Sigmoid colon (tissue), 7 donors: ENCODE measurements at regions of chr10 and their contacts with region 1.

Region 1: GRCh38 chr10:99917963-99918825 is 91.6 kb downstream of the DNMBP start:
- DNase-seq: peak; percentile 73
- H3K4me3 ChIP-seq: peak overlapping the region in 3 of 4 donors; percentile 16 to 30 (median 30)
- H3K27ac ChIP-seq: peak overlapping the region; percentile 34 to 72 (median 70)
- H3K4me1 ChIP-seq: peaks cover 0 to 17% (median 10%) of the 10 kb centered on the region in 4 donors
- H3K27me3 ChIP-seq: no peaks in the 10 kb centered on the region
- CTCF ChIP-seq: no peak
- EP300 ChIP-seq: no peak
- POLR2A ChIP-seq: no peak

Region 2: GRCh38 chr10:99845837-99846382 is 72.3 kb before region 1 on chr10:
- intact Hi-C with region 1: loop called (anchors 5 kb)
- DNase-seq: peak; percentile 91
- H3K4me3 ChIP-seq: peak overlapping the region in 3 of 4 donors; percentile 26 to 41 (median 32)
- H3K27ac ChIP-seq: peak overlapping the region in 1 of 4 donors; percentile 60
- H3K4me1 ChIP-seq: peaks cover 0 to 16% (median 4%) of the 10 kb centered on the region in 4 donors
- H3K27me3 ChIP-seq: no peaks in the 10 kb centered on the region
- CTCF ChIP-seq: peak; percentile 88 to 96 (median 90)
- EP300 ChIP-seq: no peak
- POLR2A ChIP-seq: no peak

Region 3: GRCh38 chr10:99859585-99859984 is 58.6 kb before region 1 on chr10:
- intact Hi-C with region 1: no loop called
- DNase-seq: no peak
- H3K4me3 ChIP-seq: no peak overlapping the region
- H3K27ac ChIP-seq: no peak overlapping the region
- H3K4me1 ChIP-seq: no peaks in the 10 kb centered on the region
- H3K27me3 ChIP-seq: no peaks in the 10 kb centered on the region
- CTCF ChIP-seq: no peak
- EP300 ChIP-seq: no peak
- POLR2A ChIP-seq: no peak

Region 4: GRCh38 chr10:99958302-99958701 is 40.1 kb after region 1 on chr10:
- intact Hi-C with region 1: no loop called
- DNase-seq: no peak
- H3K4me3 ChIP-seq: no peak overlapping the region
- H3K27ac ChIP-seq: peak overlapping the region; percentile 12 to 65 (median 46)
- H3K4me1 ChIP-seq: peaks cover 0 to 23% (median 12%) of the 10 kb centered on the region in 4 donors
- H3K27me3 ChIP-seq: no peaks in the 10 kb centered on the region
- CTCF ChIP-seq: no peak
- EP300 ChIP-seq: no peak
- POLR2A ChIP-seq: no peak

Region 5: GRCh38 chr10:100081075-100082001 is 163.1 kb after region 1 on chr10 and contains the start of gene CPN1:
- intact Hi-C with region 1: no loop called
- DNase-seq: no peak
- H3K4me3 ChIP-seq: no peak within 1 kb of the TSS
- H3K27ac ChIP-seq: no peak within 1 kb of the TSS
- H3K4me1 ChIP-seq: no peaks in the 10 kb centered on the region
- H3K27me3 ChIP-seq: peaks cover 0 to 6% (median 0%) of the 10 kb centered on the region in 3 donors
- CTCF ChIP-seq: no peak
- EP300 ChIP-seq: no peak
- POLR2A ChIP-seq: no peak
- total RNA-seq, gene CPN1: not detected